ENCODE measurements at regions of chrX and their contacts with region 1.

Region 1: DNA sequence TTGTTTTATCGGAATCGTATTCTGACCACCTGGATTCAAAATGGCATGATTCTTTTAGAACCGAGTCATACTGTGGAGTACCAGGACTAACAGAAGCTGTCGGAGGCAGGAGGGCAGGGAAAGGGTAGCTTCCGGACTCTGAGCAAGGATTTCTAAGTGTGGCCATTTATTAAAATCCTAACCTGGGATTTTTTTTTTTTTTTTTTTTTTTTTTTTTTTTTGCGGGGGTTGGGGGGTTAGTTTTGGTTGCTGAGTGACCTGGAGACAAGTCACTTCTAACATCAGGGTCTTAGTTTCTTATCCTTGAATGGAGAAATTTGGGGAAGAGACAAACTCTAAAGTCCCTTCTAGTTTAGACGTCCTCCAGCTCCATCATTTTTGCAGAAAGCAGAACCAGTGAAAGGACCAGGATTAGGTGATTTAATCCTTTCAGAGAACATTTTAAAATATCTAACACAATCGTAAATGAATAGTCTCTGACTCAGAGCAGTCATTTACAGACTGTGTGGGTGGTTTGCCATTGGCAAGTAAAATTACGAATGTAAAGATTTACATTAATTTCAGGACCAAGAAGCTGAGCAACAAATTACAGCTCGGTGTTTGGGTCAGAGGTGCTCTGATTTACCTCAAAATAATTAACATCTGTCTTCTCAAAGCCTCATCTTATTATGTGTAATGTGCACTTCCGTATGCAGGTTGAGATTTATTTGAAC is 7.3 kb downstream of the SLC25A5 start:
- DNase-seq: peak; percentile 27
- H3K4me3 Mint-ChIP-seq: no peak overlapping the region
- H3K27ac Mint-ChIP-seq: no peak overlapping the region
- H3K4me1 Mint-ChIP-seq: peaks cover 15% of the 10 kb centered on the region
- H3K27me3 Mint-ChIP-seq: no peaks in the 10 kb centered on the region
- CTCF ChIP-seq: no peak

Region 2: DNA sequence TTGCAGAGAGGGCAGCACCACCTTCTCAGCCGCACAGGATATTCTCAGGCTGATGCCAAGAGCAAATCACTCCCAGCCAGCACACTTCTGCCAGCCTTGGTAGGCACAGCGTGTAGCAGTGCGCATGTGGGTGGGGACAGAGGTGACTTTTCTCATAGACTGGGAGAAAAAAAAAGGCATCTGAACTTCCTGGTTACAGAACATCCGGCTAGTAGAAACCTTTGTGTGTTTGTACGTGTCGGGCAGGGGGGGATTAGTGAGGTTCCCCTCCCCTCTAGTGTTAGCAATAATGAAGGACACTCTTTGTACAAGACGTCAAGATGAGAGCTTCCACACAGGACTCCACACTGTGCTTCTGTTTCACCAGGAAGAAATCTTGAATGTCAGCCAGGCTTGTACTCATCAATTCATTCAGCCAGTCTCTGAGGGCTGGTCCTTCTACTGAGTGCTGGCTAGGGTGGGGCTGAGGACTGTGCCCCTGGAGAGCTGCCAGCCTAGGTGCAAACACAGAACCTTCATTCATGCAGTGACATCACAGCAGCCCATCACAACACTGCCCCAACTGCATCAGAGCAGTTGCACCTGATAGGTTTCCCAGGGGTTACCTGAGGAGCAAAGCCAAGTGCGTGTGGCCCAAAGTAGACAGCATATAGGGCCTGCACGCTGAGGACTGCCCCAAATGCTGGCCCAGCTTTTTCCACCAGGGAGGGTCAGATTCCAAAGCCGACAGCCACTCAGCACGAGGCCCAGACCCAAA is 27.4 kb after region 1 on chrX:
- CTCF ChIA-PET with region 1: interaction called, 4 read pairs
- POLR2A ChIA-PET with region 1: interaction called, 10 read pairs
- intact Hi-C with region 1: no loop called
- DNase-seq: peak; percentile 79
- H3K4me3 Mint-ChIP-seq: no peak overlapping the region
- H3K27ac Mint-ChIP-seq: peak overlapping the region; percentile 3
- H3K4me1 Mint-ChIP-seq: peaks cover 22% of the 10 kb centered on the region
- H3K27me3 Mint-ChIP-seq: no peaks in the 10 kb centered on the region
- CTCF ChIP-seq: no peak

Measured in MCF 10A (cell line).